GM12878 (cell line): ENCODE measurements at regions of chr4 and their contacts with region 1.

Region 1: DNA sequence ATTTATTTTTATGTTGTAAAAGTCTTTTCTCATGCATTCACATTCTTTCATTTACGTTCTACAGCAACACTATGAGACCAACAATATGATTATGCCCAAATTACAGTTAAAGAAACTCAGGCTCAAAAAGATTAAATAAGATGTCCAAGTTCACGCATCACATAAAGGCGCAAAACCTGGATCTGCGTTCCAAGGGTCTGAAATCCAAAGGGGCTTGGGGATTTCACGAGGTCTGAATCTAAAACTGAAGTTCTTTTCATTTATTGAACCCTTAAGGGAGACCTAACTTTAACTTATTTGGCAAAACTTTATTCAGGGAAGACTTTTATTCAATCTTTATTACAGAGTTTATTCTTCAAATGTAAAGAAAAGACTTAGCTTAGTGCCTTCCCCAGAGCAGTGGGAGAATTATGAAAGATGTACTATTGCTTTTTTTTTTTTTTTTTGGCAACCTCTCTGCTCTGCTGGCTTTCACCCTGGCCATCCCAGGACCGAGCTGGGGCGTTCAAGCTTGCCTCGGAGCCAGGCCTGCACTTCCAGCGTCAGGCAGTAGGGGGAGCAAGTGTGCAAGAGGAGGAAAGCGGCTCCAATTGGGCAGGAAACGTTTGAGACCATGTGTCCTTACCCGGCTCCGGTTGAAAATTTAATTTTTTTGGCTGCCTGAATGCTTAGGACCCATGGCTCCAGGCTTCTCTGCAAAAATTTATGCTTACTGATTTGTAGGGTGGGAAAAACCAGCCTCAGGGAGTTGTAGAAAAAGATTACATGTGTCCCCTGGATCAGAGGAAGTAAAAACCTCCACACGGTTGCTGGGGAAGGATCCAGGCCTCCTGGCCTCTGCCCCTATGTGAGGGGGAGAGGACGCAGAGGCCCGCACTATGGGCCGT is 344.3 kb upstream of the KLF3 start:
- DNase-seq: peak; percentile 74
- ATAC-seq: peak; percentile 80
- H3K4me3 ChIP-seq: peak overlapping the region; percentile 47
- H3K27ac ChIP-seq: peak overlapping the region; percentile 91
- H3K4me1 ChIP-seq: peaks cover 27% of the 10 kb centered on the region
- H3K27me3 ChIP-seq: no peaks in the 10 kb centered on the region
- CTCF ChIP-seq: peak; percentile 93 to 99 (median 99)
- EP300 ChIP-seq: no peak
- POLR2A ChIP-seq: no peak
- RAD21 ChIP-seq: peak; percentile 99

Region 2: GRCh38 chr4:37847311-37847884 is 472.3 kb before region 1 on chr4:
- CTCF ChIA-PET with region 1: no interaction called
- POLR2A ChIA-PET with region 1: no interaction called
- RAD21 ChIA-PET with region 1: no interaction called
- SMC1A ChIA-PET with region 1: no interaction called
- in situ Hi-C with region 1: no loop called
- intact Hi-C with region 1: no loop called
- DNase-seq: no peak
- ATAC-seq: no peak
- H3K4me3 ChIP-seq: no peak overlapping the region
- H3K27ac ChIP-seq: no peak overlapping the region
- H3K4me1 ChIP-seq: peaks cover 2% of the 10 kb centered on the region; the same call in 1 of the 2 replicates
- H3K27me3 ChIP-seq: no peaks in the 10 kb centered on the region
- CTCF ChIP-seq: no peak
- EP300 ChIP-seq: no peak
- POLR2A ChIP-seq: no peak
- RAD21 ChIP-seq: no peak

Region 3: GRCh38 chr4:38069271-38069760 is 250.4 kb before region 1 on chr4:
- CTCF ChIA-PET with region 1: interaction called, 20 read pairs
- POLR2A ChIA-PET with region 1: no interaction called
- RAD21 ChIA-PET with region 1: interaction called, 20 read pairs
- SMC1A ChIA-PET with region 1: interaction called, 12 read pairs
- in situ Hi-C with region 1: no loop called
- intact Hi-C with region 1: no loop called
- DNase-seq: no peak
- ATAC-seq: peak; percentile 63
- H3K4me3 ChIP-seq: no peak overlapping the region
- H3K27ac ChIP-seq: peak overlapping the region; percentile 22
- H3K4me1 ChIP-seq: peaks cover 19% of the 10 kb centered on the region
- H3K27me3 ChIP-seq: no peaks in the 10 kb centered on the region
- CTCF ChIP-seq: peak; percentile 48 to 79 (median 67); a peak in 5 of 6 replicates
- EP300 ChIP-seq: no peak
- POLR2A ChIP-seq: no peak
- RAD21 ChIP-seq: peak; percentile 92

Region 4: DNA sequence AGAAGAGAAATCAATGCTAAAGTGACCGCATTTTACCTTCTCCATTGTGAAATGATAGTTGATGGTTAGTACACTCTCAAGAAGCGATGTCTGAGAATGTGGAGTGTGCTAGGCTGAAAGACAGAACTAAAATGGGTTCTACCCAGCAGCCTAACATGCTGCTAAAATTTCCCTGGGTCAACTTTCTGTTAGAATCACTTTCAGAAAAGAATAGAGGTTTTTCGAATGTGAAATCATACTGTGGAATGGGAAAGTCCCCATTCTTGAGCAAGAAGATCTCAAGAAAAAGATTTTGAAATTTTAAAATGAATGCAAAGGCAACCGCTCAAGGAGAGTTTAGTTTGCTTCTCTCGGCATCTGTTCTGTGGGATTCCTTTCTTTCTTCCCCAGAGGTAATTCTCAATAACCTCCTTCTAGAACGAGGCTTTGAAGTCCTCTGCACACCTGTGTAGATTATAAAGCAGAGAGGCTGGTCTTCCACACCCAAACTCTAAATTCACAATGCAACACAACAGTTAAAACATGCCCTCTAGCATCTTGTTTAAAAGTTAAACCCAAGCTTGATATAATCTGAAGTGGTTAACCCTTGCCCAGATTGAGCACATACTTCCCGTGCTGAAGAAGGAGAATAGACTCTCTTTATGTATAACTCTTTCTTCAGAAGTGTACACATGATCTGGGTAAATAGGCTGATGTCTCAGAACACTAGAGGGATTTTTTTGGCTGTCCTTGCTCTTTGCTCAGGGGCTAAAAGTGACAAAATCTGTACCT is 135.6 kb after region 1 on chr4:
- CTCF ChIA-PET with region 1: interaction called, 5 read pairs
- POLR2A ChIA-PET with region 1: no interaction called
- RAD21 ChIA-PET with region 1: interaction called, 3 read pairs
- SMC1A ChIA-PET with region 1: no interaction called
- in situ Hi-C with region 1: no loop called
- intact Hi-C with region 1: loop called (anchors 1 kb)
- DNase-seq: peak; percentile 53
- ATAC-seq: peak; percentile 93
- H3K4me3 ChIP-seq: peak overlapping the region; percentile 40; the same call in 1 of the 2 replicates
- H3K27ac ChIP-seq: peak overlapping the region; percentile 85
- H3K4me1 ChIP-seq: peaks cover 41% of the 10 kb centered on the region
- H3K27me3 ChIP-seq: no peaks in the 10 kb centered on the region
- CTCF ChIP-seq: no peak
- EP300 ChIP-seq: no peak
- POLR2A ChIP-seq: no peak
- RAD21 ChIP-seq: no peak

Region 5: DNA sequence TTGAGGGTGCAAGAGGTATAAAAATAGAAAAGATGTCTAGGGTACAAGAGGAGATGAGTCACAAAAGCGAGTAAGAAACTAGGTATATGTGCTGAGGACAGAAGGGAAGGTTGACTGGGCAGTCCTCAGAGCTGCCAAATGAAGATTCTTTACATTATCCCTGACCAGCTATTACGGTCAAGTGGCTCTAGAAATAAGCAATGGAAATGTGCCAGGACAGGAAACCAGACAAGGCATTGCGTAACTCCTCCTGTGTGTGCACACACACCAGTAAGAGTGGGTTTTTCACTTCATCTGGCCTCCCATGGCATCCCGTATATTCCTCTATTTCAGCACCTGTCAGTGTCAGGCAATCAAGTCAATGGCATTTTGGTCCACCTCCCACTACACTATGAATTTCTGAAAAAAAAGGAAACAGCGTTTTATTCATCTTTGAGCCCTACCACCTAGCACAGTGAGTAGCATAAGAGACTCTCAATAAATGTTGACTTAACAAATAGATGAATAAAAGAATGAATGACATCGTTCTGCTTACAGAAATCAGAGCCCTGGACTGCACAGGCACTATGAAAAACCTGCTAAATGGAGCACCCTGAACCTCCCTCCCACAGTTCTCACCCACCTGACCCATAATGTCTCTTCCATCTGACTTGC is 281.7 kb after region 1 on chr4:
- CTCF ChIA-PET with region 1: no interaction called
- POLR2A ChIA-PET with region 1: no interaction called
- RAD21 ChIA-PET with region 1: interaction called, 12 read pairs
- SMC1A ChIA-PET with region 1: no interaction called
- in situ Hi-C with region 1: no loop called
- intact Hi-C with region 1: no loop called
- DNase-seq: no peak
- ATAC-seq: no peak
- H3K4me3 ChIP-seq: no peak overlapping the region
- H3K27ac ChIP-seq: no peak overlapping the region
- H3K4me1 ChIP-seq: no peaks in the 10 kb centered on the region
- H3K27me3 ChIP-seq: no peaks in the 10 kb centered on the region
- CTCF ChIP-seq: no peak
- EP300 ChIP-seq: no peak
- POLR2A ChIP-seq: no peak
- RAD21 ChIP-seq: no peak

Region 6: DNA sequence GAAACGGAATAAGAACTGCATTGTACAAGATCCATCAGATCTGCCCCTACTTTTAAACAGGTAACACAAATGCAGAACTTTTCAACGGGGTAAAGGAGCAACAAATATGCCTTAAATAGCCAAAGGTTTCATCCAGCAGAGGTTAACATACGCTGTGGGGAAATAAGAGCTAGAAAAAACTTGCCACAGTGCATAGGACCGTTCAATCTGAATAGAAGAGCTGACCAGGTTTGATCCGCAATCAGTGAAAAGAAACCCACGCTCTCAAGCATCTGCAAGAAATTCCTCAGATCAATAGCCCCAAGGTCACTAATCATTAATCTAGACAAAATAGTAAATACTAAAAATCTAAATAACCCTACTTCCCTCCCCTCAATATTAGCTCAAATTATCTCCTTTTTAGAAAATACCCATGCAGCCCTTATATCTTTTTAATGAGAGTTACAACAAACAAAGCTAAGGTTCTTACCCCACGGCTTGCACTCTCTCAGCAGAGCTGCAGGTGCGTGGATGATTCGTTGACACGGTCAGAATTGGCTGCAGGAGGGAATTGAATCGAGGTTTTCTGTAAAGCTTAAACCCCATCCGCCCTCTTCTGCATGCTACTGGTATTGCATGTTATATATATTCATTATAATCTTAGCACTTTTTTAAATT is 462.9 kb after region 1 on chr4 and contains the start of gene TLR10:
- CTCF ChIA-PET with region 1: interaction called, 3 read pairs
- POLR2A ChIA-PET with region 1: interaction called, 4 read pairs
- RAD21 ChIA-PET with region 1: interaction called, 19 read pairs
- SMC1A ChIA-PET with region 1: interaction called, 5 read pairs
- in situ Hi-C with region 1: no loop called
- intact Hi-C with region 1: no loop called
- DNase-seq: peak; percentile 82
- ATAC-seq: peak; percentile 74
- H3K4me3 ChIP-seq: peak within 1 kb of the TSS; percentile 81
- H3K27ac ChIP-seq: peak within 1 kb of the TSS; percentile 96
- H3K4me1 ChIP-seq: peaks cover 22% of the 10 kb centered on the region
- H3K27me3 ChIP-seq: no peaks in the 10 kb centered on the region
- CTCF ChIP-seq: peak; percentile 60 to 68 (median 63)
- EP300 ChIP-seq: no peak
- POLR2A ChIP-seq: peak; percentile 72
- RAD21 ChIP-seq: peak; percentile 83
- polyA plus RNA-seq, gene TLR10: 31.5 to 41.8 TPM